ENCODE measurements at regions of chr11 and their contacts with region 1.

Region 1: GRCh38 chr11:8033305-8034105 is 46.4 kb downstream of the EIF3F start:
- DNase-seq: peak; percentile 56
- H3K4me3 ChIP-seq: no peak overlapping the region
- H3K27ac ChIP-seq: no peak overlapping the region
- H3K4me1 ChIP-seq: no peaks in the 10 kb centered on the region
- H3K27me3 ChIP-seq: no peaks in the 10 kb centered on the region
- CTCF ChIP-seq: peak; percentile 85 to 95

Region 2: DNA sequence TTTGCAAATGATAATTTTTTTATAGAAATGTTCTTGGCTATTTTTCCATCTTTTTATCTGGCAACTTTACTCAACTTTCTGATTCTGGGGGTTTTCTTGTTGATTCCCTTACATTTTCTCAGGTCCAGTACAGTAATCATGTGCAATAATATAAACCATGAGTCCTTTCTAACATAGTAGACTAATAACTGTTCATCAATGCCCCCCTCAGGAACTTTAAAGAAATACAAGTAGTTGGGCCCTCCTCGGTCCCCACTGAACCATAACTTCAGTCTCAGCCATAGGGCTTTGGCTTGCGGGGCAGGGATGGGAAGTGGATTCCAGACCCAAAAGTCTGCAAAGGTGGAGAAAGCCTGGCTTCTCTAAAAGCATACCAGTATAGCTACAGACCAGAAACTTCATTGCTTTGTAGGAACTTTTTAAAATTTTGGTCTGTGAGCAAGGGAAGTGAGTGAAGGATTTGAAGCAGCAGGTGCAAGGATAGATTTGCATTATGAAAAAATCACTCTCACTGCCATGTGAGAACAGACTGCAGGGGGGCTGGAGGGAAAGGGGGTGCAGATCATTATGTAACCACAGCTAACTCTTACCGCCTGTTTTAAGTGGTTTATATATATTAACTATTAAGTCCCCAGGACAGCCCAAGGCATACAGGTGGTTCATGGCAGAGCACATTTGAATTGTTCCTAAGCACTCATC is 37.1 kb after region 1 on chr11:
- CTCF ChIA-PET with region 1: no interaction called
- dilution Hi-C with region 1: no loop called
- in situ Hi-C with region 1: no loop called
- intact Hi-C with region 1: loop called (anchors 1 kb)
- DNase-seq: peak; percentile 27
- H3K4me3 ChIP-seq: no peak overlapping the region
- H3K27ac ChIP-seq: no peak overlapping the region
- H3K4me1 ChIP-seq: no peaks in the 10 kb centered on the region
- H3K27me3 ChIP-seq: no peaks in the 10 kb centered on the region
- CTCF ChIP-seq: peak; percentile 26 to 50

Region 3: DNA sequence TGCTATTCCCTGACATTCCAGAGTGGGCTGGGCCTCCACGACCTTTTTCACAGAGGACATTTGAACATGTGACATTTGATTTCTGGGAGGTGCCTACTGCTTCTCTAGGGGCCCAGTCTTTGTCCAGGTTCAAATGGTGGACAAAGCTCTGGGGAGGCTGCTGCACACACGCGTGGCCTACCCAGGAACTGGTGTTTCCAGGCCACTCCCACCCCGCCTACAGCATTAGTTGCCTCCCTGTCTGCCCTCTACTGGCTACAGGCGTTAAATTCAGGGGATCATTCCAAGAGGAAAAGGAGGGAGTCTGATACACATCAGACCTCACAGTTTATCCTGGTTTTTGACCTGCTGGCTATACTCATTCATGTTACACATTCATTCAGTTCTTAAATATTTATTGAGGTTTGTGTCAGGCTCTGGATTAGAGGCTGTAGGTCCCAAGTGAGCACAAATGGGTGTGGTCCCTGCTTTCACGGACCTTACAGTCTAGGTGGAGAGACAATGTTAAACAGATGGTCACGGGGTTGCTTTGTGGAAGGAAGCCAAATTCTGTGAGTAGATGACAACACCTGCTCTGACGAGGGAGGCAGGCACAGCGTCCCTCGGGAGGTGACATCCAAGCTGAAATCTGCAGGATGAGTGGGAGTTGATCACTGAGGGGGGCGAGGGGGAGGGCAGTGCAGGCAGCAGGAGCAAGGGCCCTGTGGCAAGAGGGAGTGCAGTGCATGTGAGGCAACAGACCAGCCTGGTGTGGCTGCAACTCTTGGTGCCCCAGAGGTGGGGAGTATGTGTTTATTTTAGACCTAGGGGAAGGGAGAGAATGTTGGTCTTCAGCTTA is 59.3 kb after region 1 on chr11:
- CTCF ChIA-PET with region 1: no interaction called
- dilution Hi-C with region 1: no loop called
- in situ Hi-C with region 1: no loop called
- intact Hi-C with region 1: loop called (anchors 1 kb)
- DNase-seq: peak; percentile 48
- H3K4me3 ChIP-seq: no peak overlapping the region
- H3K27ac ChIP-seq: no peak overlapping the region
- H3K4me1 ChIP-seq: no peaks in the 10 kb centered on the region
- H3K27me3 ChIP-seq: no peaks in the 10 kb centered on the region
- CTCF ChIP-seq: peak; percentile 80 to 84